Tibial artery (tissue), 4 donors: ENCODE measurements at regions of chr9 and their contacts with region 1.

Region 1: GRCh38 chr9:93095205-93096130 is 549 bp upstream of the CARD19 start:
- DNase-seq: peak; percentile 98 to 100
- H3K4me3 ChIP-seq: peak overlapping the region; percentile 89 to 93
- H3K27ac ChIP-seq: peak overlapping the region; percentile 96 to 97
- H3K4me1 ChIP-seq: peaks cover 7 to 53% (median 45%) of the 10 kb centered on the region in 4 donors
- H3K27me3 ChIP-seq: no peaks in the 10 kb centered on the region
- CTCF ChIP-seq: no peak

Region 2: DNA sequence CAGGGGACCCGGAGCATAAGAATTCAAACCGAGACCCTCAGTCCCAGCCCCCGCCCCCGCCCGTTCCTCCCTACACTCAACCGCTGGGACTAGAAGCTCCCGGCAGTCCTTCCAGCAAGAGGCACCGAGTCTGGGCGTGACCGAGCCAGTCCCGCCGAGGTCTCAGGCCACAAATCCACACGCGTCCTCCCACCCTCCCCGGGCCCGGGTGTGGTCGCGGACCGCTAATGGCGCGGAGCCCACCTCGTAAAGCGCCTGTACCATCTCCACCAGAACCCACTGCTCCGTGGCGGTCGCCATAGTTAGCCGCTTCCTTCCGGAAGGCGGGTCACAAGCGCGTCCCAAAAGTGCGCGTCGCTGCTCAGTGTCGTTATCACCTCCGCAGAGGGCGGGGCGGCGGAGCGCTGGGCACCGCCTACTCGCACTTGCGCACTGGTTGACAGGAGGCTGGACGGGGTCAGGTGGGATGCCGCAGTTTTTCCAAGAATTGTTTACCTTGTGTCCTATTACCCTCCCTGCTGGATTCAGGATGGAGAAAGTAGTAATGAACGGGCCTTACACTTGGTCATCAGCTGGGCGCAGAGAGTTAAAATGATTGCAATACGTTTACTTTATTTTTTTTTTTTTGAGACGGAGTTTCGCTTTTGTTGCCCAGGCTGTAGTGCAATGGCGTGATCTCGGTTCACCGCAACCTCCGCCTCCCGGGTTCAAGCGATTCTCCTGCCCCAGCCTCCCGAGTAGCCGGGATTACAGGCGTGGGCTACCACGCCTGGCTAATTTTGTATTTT is 980.2 kb before region 1 on chr9 and contains the start of gene SPTLC1:
- intact Hi-C with region 1: loop called (anchors 10 kb)
- DNase-seq: peak; percentile 94 to 97
- H3K4me3 ChIP-seq: peak within 1 kb of the TSS; percentile 82 to 90
- H3K27ac ChIP-seq: peak within 1 kb of the TSS; percentile 84 to 87
- H3K4me1 ChIP-seq: peaks cover 0 to 17% (median 14%) of the 10 kb centered on the region in 4 donors
- H3K27me3 ChIP-seq: no peaks in the 10 kb centered on the region
- CTCF ChIP-seq: no peak

Region 3: GRCh38 chr9:92954049-92954861 is 141.2 kb before region 1 on chr9:
- intact Hi-C with region 1: no loop called
- DNase-seq: no peak
- H3K4me3 ChIP-seq: no peak overlapping the region
- H3K27ac ChIP-seq: no peak overlapping the region
- H3K4me1 ChIP-seq: no peaks in the 10 kb centered on the region
- H3K27me3 ChIP-seq: peaks cover 0 to 15% of the 10 kb centered on the region in 2 donors
- CTCF ChIP-seq: no peak

Region 4: GRCh38 chr9:93058355-93059096 is 36.9 kb before region 1 on chr9 and contains the start of gene SUSD3:
- intact Hi-C with region 1: loop called (anchors 5 kb)
- DNase-seq: peak; percentile 53 to 81
- H3K4me3 ChIP-seq: peak within 1 kb of the TSS; percentile 54 to 72
- H3K27ac ChIP-seq: peak within 1 kb of the TSS; percentile 64 to 69
- H3K4me1 ChIP-seq: peaks cover 8 to 51% (median 44%) of the 10 kb centered on the region in 4 donors
- H3K27me3 ChIP-seq: no peaks in the 10 kb centered on the region
- CTCF ChIP-seq: no peak

Region 5: DNA sequence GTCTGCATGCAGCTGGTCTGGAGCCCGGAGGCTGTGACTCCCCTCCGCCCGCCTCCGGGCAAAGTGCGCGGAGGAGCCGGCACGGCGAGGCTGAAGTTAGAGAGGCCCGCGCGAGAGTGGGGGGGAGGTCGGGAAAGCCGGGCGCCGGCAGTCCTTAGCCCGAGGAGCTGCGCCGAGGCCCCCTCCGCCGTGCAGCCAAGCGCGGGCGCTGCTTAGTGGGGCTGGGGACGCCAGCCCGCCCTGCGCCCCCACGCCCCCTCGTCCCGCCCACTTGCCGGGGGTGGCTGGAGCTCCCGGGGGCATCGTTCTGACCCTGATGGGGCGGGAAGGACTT is 38.2 kb after region 1 on chr9:
- intact Hi-C with region 1: loop called (anchors 1 kb)
- DNase-seq: peak; percentile 86 to 93
- H3K4me3 ChIP-seq: peak overlapping the region; percentile 82 to 96
- H3K27ac ChIP-seq: peak overlapping the region; percentile 98 to 100
- H3K4me1 ChIP-seq: peaks cover 5 to 63% (median 56%) of the 10 kb centered on the region in 4 donors
- H3K27me3 ChIP-seq: no peaks in the 10 kb centered on the region
- CTCF ChIP-seq: no peak